PC-3 (cell line): ENCODE measurements at regions of chr7 and their contacts with region 1.

Region 1: DNA sequence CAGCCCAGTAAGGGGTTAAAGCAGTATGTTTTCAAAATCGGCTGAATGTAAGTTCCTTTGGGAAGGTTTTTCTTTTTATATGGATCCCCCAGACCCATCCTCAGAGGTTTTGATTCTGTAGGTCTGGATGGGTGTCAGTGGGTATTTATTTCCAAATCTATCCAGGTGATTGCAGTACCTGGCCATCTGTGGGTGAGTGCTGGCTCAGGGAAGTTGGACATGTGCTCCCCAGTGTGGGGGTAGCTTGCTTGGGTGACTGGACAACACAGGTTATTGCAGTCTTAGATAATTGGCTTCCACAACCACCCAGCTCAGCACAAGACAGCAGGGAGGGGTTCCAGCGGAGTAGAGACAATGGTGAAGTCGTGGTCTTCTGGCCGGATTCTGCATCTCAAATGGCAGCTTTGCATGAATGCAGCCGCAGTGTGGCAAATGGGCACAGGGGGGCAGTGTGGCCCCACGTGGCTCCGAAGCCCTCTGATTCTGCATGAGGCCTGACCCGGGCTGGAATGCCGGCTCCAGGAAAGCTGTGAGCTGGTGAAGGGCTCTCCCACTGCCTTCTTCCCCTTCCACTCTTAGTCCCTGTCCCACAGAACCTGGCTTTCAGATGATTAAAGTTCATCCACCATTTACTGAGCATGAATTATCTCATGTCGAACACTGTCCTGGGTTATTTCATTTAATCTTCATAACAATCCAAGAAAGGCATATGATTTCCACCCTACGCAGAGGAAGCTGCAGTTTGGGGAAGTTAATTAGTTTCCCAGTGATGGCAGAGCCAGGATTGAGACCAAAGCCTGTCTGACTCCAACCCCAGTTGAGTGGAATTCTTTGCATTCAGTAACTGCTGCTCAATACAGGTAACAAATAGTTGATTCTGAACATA is 64.5 kb upstream of the SYPL1 start:
- DNase-seq: peak; percentile 93
- ATAC-seq: peak; percentile 63
- H3K4me3 ChIP-seq: no peak overlapping the region
- H3K27ac ChIP-seq: no peak overlapping the region
- H3K4me1 ChIP-seq: peaks cover 20% of the 10 kb centered on the region
- H3K27me3 ChIP-seq: no peaks in the 10 kb centered on the region
- CTCF ChIP-seq: peak; percentile 99

Region 2: DNA sequence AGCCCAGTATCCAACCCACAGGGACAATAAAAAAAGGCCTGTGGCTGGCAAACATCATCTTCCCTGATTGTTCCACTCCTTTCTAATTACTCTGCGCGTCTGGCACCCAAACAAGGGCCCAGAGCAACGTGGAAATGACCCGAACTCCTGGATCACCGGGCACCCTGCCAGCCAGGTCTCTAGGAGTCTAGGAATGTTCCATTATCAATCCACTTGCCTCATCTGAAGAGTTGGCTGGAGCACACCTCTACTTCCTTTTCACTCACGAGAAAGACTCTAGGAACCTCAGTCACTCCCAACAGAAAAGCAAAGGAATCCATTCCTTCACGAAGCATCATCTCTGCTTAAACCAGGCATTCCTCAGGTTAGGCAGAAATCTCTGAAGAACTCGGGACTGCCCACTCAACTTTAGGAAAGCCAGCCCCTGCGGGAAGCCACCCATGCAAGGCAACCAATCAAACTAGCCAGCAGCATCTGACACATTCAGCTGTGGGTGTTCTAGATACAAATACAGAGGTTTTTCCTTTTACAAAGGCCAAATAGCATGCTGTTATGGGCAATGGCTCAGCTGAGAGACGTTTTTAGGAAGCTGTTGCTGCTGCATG is 337.9 kb before region 1 on chr7:
- CTCF ChIA-PET with region 1: no interaction called
- POLR2A ChIA-PET with region 1: no interaction called
- intact Hi-C with region 1: no loop called
- DNase-seq: no peak
- ATAC-seq: no peak
- H3K4me3 ChIP-seq: no peak overlapping the region
- H3K27ac ChIP-seq: no peak overlapping the region
- H3K4me1 ChIP-seq: no peaks in the 10 kb centered on the region
- H3K27me3 ChIP-seq: no peaks in the 10 kb centered on the region
- CTCF ChIP-seq: no peak

Region 3: DNA sequence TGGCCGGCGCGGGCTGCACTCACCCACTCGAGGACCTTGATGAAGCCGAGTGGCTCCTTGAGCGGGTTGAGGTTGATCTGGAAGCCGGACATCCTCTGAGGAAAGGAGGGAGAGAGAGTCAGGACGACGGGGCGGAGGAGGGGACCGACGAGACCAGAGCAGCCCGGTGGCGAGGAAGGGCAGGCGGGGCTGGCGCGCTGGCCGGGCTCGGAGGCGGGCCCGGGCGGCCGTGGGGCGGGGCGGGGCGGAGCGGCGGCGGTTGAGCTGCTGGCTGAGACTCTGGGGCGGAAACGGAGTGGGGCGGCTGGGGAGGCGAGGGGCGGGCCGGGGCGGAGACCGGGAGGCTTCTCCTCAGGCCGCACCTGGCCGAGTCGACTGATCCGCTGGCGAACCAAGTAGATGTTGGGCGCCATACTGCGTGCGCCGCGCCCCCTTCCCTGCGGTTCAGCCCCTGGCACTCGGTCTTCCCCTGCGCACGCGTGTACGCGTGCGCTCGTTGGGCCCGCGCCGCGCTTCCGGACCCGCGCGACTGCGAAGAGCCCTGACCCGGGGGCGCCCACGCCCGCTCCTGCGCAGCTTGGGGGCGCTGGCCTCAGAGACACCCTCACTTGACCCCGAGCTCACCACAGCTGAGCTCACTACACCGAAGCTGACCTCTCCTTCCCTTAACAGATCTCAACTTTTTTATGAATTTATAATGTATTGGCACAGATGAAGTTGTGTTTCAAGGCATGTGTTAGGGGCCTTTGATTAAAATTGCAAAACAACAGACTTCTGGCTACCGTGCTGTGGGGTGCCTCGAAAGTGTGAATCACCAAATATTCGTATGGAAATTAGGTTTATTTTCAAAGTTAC is 64.3 kb before region 1 on chr7 and contains the start of gene SYPL1:
- CTCF ChIA-PET with region 1: no interaction called
- POLR2A ChIA-PET with region 1: no interaction called
- intact Hi-C with region 1: no loop called
- DNase-seq: peak; percentile 94
- ATAC-seq: peak; percentile 82
- H3K4me3 ChIP-seq: peak within 1 kb of the TSS; percentile 90
- H3K27ac ChIP-seq: peak within 1 kb of the TSS; percentile 71
- H3K4me1 ChIP-seq: peaks cover 30% of the 10 kb centered on the region
- H3K27me3 ChIP-seq: no peaks in the 10 kb centered on the region
- CTCF ChIP-seq: 0 out of 2 replicates have a peak, but pooled peaks have one; percentile 20
- total RNA-seq, gene SYPL1: 45.9 and 57.9 TPM in 2 replicates

Region 4: GRCh38 chr7:106196460-106197021 is 19.9 kb after region 1 on chr7:
- CTCF ChIA-PET with region 1: no interaction called
- POLR2A ChIA-PET with region 1: no interaction called
- intact Hi-C with region 1: loop called (anchors 1 kb)
- DNase-seq: peak; percentile 41
- ATAC-seq: peak; percentile 92
- H3K4me3 ChIP-seq: no peak overlapping the region
- H3K27ac ChIP-seq: no peak overlapping the region
- H3K4me1 ChIP-seq: no peaks in the 10 kb centered on the region
- H3K27me3 ChIP-seq: no peaks in the 10 kb centered on the region
- CTCF ChIP-seq: no peak

Region 5: DNA sequence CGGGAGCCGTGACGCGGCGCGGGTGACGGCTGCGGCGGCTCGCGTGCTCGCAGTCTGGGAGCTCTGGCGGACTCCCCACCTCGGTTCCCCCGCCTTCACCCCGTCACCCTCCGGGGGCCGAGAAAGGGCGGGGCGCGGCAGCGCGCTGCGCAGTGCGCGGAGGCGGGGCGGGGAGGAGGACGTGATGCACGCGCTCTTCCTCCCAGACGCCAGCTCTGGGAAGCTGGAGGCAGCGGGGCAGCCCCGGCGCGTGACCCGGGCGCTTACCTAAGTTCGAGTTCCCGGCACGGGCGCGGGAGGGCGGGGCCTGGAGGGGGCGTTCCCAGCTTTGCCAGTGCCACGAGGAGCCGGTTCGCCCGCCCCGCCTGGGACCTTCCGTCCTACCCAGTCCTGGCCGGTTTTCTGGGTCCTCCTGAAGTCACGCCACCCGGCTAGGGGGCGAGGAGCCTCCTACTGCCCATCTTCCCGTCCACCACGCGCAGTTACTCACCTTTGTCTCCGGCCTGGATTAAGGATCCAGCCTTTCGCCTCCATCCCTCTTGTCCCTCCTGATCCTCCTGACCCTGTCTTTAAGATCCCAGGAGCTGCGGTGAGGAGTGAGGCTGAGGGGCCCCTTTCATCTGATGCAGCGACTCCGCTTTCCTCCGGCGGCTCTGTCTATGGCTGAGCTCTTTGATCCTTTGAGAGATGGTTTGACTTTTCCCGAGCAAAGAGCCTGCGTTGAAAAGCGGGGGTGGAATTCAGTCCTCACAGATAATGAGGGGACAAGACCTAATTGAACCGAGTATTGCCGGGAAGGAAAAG is 108.6 kb after region 1 on chr7:
- CTCF ChIA-PET with region 1: interaction called, 10 read pairs
- POLR2A ChIA-PET with region 1: interaction called, 6 read pairs
- intact Hi-C with region 1: loop called (anchors 2 kb)
- DNase-seq: peak; percentile 100
- ATAC-seq: peak; percentile 83
- H3K4me3 ChIP-seq: peak overlapping the region; percentile 79
- H3K27ac ChIP-seq: peak overlapping the region; percentile 70
- H3K4me1 ChIP-seq: peaks cover 26% of the 10 kb centered on the region
- H3K27me3 ChIP-seq: no peaks in the 10 kb centered on the region
- CTCF ChIP-seq: no peak

Region 6: GRCh38 chr7:106367018-106367420 is 190.4 kb after region 1 on chr7:
- CTCF ChIA-PET with region 1: no interaction called
- POLR2A ChIA-PET with region 1: no interaction called
- intact Hi-C with region 1: loop called (anchors 1 kb)
- DNase-seq: peak; percentile 57
- ATAC-seq: peak; percentile 65
- H3K4me3 ChIP-seq: no peak overlapping the region
- H3K27ac ChIP-seq: no peak overlapping the region
- H3K4me1 ChIP-seq: peaks cover 9% of the 10 kb centered on the region
- H3K27me3 ChIP-seq: no peaks in the 10 kb centered on the region
- CTCF ChIP-seq: peak; percentile 66

Region 7: GRCh38 chr7:106480161-106480579 is 303.5 kb after region 1 on chr7:
- CTCF ChIA-PET with region 1: no interaction called
- POLR2A ChIA-PET with region 1: no interaction called
- intact Hi-C with region 1: no loop called
- DNase-seq: no peak
- ATAC-seq: no peak
- H3K4me3 ChIP-seq: no peak overlapping the region
- H3K27ac ChIP-seq: no peak overlapping the region
- H3K4me1 ChIP-seq: peaks cover 8% of the 10 kb centered on the region
- H3K27me3 ChIP-seq: no peaks in the 10 kb centered on the region
- CTCF ChIP-seq: no peak

Region 8: DNA sequence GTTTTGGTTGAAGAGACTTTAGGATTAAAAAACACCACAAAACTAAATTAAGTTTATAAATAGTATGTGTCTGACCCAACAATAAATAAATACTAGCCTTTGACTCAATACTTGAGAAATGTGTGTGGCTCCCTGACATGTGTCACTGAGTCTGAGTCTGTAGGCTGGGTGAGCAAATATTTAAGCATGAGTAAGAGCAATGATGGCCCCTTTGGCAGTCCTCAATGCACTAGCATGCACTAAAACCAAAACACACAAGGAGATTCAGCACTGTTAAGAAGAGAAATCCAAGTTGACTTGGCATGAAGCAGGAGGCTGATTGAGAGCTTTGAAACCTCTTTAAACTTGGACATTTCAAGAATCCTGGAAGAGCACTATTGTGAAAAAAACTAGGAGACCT is 447.2 kb after region 1 on chr7:
- CTCF ChIA-PET with region 1: no interaction called
- POLR2A ChIA-PET with region 1: no interaction called
- intact Hi-C with region 1: loop called (anchors 10 kb)
- DNase-seq: peak; percentile 93
- ATAC-seq: peak; percentile 93
- H3K4me3 ChIP-seq: no peak overlapping the region
- H3K27ac ChIP-seq: peak overlapping the region; percentile 75
- H3K4me1 ChIP-seq: peaks cover 66% of the 10 kb centered on the region
- H3K27me3 ChIP-seq: no peaks in the 10 kb centered on the region
- CTCF ChIP-seq: no peak

Region 9: GRCh38 chr7:106652909-106653308 is 476.3 kb after region 1 on chr7:
- CTCF ChIA-PET with region 1: no interaction called
- POLR2A ChIA-PET with region 1: no interaction called
- intact Hi-C with region 1: no loop called
- DNase-seq: no peak
- ATAC-seq: no peak
- H3K4me3 ChIP-seq: no peak overlapping the region
- H3K27ac ChIP-seq: no peak overlapping the region
- H3K4me1 ChIP-seq: no peaks in the 10 kb centered on the region
- H3K27me3 ChIP-seq: no peaks in the 10 kb centered on the region
- CTCF ChIP-seq: no peak

Region 10: GRCh38 chr7:106978425-106979420 is 802.1 kb after region 1 on chr7:
- CTCF ChIA-PET with region 1: no interaction called
- POLR2A ChIA-PET with region 1: interaction called, 10 read pairs
- intact Hi-C with region 1: no loop called
- DNase-seq: no peak
- ATAC-seq: no peak
- H3K4me3 ChIP-seq: no peak overlapping the region
- H3K27ac ChIP-seq: no peak overlapping the region
- H3K4me1 ChIP-seq: no peaks in the 10 kb centered on the region
- H3K27me3 ChIP-seq: peaks cover 14% of the 10 kb centered on the region; the same call in 1 of the 2 replicates
- CTCF ChIP-seq: no peak